ENCODE measurements at regions of chr12 and their contacts with region 1.

Region 1: DNA sequence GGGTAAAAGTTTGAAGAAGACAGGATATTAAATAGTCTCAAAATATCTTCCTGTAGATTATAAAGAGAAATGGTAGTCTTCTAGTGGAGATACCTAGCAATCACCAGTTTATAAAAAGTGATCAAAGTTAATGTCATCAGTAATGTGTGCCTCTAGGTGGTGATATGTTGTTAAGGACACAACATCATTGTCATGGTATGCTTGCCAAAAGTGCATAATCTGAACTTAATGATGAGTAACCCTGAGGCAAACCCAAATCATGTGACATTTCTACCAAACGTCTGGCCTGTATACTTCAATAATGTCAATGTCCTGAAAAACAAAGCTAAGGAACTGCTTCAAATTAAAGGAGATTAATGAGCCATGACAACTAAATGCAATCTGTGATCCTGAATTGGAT is 214.7 kb downstream of the PHLDA1 start:
- DNase-seq: peak; percentile 58
- ATAC-seq: peak; percentile 61
- H3K4me3 ChIP-seq: no peak overlapping the region
- H3K27ac ChIP-seq: peak overlapping the region; percentile 100
- H3K4me1 ChIP-seq: peaks cover 48 to 80% of the 10 kb centered on the region in 2 experiments
- H3K27me3 ChIP-seq: no peaks in the 10 kb centered on the region
- CTCF ChIP-seq: peak in 1 of 3 experiments; percentile 32; a peak in 2 of 6 replicates
- POLR2A ChIP-seq: no peak
- RAD21 ChIP-seq: peak; percentile 60

Region 2: GRCh38 chr12:74337951-74338350 is 1478.9 kb before region 1 on chr12:
- CTCF ChIA-PET with region 1: no interaction called
- POLR2A ChIA-PET with region 1: no interaction called
- RAD21 ChIA-PET with region 1: no interaction called
- intact Hi-C with region 1: loop called (anchors 10 kb)
- DNase-seq: peak; percentile 76
- ATAC-seq: peak; percentile 91
- H3K4me3 ChIP-seq: peak overlapping the region in 1 of 2 experiments; percentile 8; a peak in 1 of 4 replicates
- H3K27ac ChIP-seq: peak overlapping the region; percentile 60; the same call in 1 of the 2 replicates
- H3K4me1 ChIP-seq: peaks cover 20 to 68% of the 10 kb centered on the region in 2 experiments
- H3K27me3 ChIP-seq: no peaks in the 10 kb centered on the region
- CTCF ChIP-seq: no peak
- POLR2A ChIP-seq: no peak
- RAD21 ChIP-seq: 0 out of 2 replicates have a peak, but pooled peaks have one; percentile 6

Region 3: GRCh38 chr12:75137896-75138295 is 679.0 kb before region 1 on chr12:
- CTCF ChIA-PET with region 1: no interaction called
- POLR2A ChIA-PET with region 1: no interaction called
- RAD21 ChIA-PET with region 1: no interaction called
- intact Hi-C with region 1: no loop called
- DNase-seq: no peak
- ATAC-seq: no peak
- H3K4me3 ChIP-seq: no peak overlapping the region
- H3K27ac ChIP-seq: no peak overlapping the region
- H3K4me1 ChIP-seq: no peaks in the 10 kb centered on the region
- H3K27me3 ChIP-seq: no peaks in the 10 kb centered on the region
- CTCF ChIP-seq: no peak
- POLR2A ChIP-seq: no peak
- RAD21 ChIP-seq: no peak

Region 4: DNA sequence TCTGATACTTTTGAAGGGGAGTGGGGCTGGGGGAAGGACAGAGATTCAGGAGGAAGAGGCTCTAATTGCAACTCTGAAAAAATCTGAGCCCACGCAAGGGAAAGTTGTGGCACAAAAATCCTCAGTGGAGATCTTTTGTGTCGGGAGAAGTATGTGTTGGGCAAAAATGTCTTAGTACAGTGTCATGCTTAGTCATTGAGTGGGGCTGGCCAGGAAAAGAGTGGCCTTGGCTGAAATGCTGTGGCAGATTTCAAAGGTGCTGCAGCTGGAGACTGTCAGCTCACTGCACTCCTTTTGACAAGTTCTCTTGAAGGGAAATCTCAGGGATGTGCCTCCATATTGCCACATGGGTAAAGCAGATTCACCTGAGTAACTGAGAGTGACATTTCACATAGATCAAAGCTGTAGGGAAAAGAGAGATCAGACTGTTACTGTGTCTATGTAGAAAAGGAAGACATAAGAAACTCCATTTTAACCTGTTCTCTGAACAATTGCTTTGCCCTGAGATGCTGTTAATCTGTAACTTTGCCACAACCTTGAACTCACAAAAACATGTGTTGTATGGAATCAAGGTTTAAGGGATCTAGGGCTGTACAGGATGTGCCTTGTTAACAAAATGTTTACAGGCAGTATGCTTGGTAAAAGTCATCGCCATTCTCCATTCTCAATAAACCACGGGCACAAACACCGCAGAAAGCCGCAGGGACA is 372.3 kb before region 1 on chr12:
- CTCF ChIA-PET with region 1: no interaction called
- POLR2A ChIA-PET with region 1: no interaction called
- RAD21 ChIA-PET with region 1: no interaction called
- intact Hi-C with region 1: no loop called
- DNase-seq: no peak
- ATAC-seq: 0 out of 2 replicates have a peak, but pooled peaks have one; percentile 22
- H3K4me3 ChIP-seq: no peak overlapping the region
- H3K27ac ChIP-seq: no peak overlapping the region
- H3K4me1 ChIP-seq: peaks cover 0 to 21% of the 10 kb centered on the region in 2 experiments; a peak in 3 of 4 replicates
- H3K27me3 ChIP-seq: no peaks in the 10 kb centered on the region
- CTCF ChIP-seq: no peak
- POLR2A ChIP-seq: no peak
- RAD21 ChIP-seq: no peak

Region 5: GRCh38 chr12:75944097-75944904 is 127.4 kb after region 1 on chr12:
- CTCF ChIA-PET with region 1: no interaction called
- POLR2A ChIA-PET with region 1: no interaction called
- RAD21 ChIA-PET with region 1: no interaction called
- intact Hi-C with region 1: loop called (anchors 10 kb)
- DNase-seq: peak; percentile 84
- ATAC-seq: peak; percentile 74
- H3K4me3 ChIP-seq: peak overlapping the region in 1 of 2 experiments; percentile 13; a peak in 1 of 4 replicates
- H3K27ac ChIP-seq: peak overlapping the region; percentile 100
- H3K4me1 ChIP-seq: peaks cover 58 to 71% of the 10 kb centered on the region in 2 experiments
- H3K27me3 ChIP-seq: no peaks in the 10 kb centered on the region
- CTCF ChIP-seq: no peak
- POLR2A ChIP-seq: no peak
- RAD21 ChIP-seq: peak; percentile 17; the same call in 1 of the 2 replicates

Region 6: DNA sequence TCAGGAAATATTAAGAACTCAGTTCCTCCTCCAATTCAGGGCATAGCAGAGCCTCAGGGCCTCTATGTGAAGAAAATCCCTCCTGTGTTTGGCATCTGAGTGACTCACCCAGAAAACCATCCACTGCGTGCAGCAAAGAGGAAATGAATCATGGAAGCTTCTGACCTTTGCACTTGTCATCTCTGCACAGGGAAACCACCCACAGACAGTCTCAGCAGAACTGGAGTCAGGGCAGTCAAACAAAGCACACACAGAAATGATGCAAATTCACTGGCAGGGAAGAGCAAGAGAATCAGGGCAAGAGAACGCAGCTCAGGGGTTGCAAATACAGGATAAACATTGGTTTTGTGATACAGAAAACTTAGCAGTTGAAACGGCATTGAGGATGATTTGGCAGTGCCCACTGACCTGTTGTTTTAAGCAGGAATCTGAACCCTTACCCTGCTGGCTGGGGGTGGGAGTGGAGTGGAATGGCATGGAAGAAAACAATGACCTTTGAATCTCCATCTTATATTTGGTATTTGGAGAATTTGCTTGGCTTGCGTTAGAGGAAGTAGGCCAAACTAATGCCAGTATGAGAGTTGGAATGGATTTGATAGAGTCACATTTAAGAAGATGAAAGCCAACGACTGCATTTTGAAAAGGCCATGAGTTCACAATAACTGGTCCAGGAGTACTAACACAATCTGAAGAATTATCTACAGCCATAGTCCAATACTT is 161.2 kb after region 1 on chr12:
- CTCF ChIA-PET with region 1: no interaction called
- POLR2A ChIA-PET with region 1: no interaction called
- RAD21 ChIA-PET with region 1: no interaction called
- intact Hi-C with region 1: loop called (anchors 2 kb)
- DNase-seq: peak; percentile 94
- ATAC-seq: peak; percentile 80
- H3K4me3 ChIP-seq: no peak overlapping the region
- H3K27ac ChIP-seq: peak overlapping the region; percentile 98
- H3K4me1 ChIP-seq: peaks cover 70 to 89% of the 10 kb centered on the region in 2 experiments
- H3K27me3 ChIP-seq: no peaks in the 10 kb centered on the region
- CTCF ChIP-seq: 0 out of 6 replicates have a peak, but pooled peaks of 1 of the 3 experiments have one; percentile 3
- POLR2A ChIP-seq: no peak
- RAD21 ChIP-seq: peak; percentile 38